CD4-positive, alpha-beta T cell (primary cell): ENCODE measurements at regions of chr12 and their contacts with region 1.

Region 1: DNA sequence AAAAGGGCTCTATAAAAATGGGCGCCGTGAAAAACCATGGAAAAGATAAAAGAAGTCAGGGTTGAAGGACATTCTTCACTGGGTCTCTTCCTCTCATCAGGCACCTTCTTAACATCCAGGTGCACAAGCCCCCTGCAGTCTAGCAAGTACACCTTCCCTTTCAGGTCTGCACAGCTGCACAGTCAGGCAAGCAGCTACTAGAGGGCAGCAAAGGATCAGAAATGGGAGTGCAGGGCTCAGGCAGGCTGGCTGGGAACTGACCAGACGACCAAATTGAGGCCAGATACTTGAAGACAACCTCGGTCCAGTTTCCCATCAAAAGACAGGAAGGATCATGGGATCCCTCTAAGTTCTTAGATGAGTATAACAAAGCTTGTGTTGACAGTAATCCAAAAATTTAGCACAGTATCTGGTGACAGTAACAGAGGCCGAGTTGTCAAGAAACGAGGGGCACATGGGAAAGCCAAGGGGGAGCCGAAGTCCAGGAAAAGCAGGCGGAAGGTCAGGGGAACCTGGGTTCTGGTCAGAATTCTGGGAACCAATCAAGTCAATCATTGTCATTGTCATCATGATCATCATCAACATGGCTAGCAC is 10.1 kb upstream of the GRIP1 start:
- DNase-seq: peak in 12 of 14 experiments; percentile 8 to 65 (median 23)
- ATAC-seq: peak; percentile 52
- H3K4me3 ChIP-seq: no peak overlapping the region
- H3K4me3 Mint-ChIP-seq: no peak overlapping the region
- H3K27ac ChIP-seq: no peak overlapping the region
- H3K27ac Mint-ChIP-seq: no peak overlapping the region
- H3K4me1 ChIP-seq: no peaks in the 10 kb centered on the region
- H3K4me1 Mint-ChIP-seq: peaks cover 3% of the 10 kb centered on the region
- H3K27me3 ChIP-seq: peaks cover 5% of the 10 kb centered on the region in 2 experiments
- H3K27me3 Mint-ChIP-seq: peaks cover 9% of the 10 kb centered on the region
- CTCF ChIP-seq: peak; percentile 61

Region 2: GRCh38 chr12:66662729-66663128 is 26.2 kb before region 1 on chr12:
- CTCF ChIA-PET with region 1: no interaction called
- POLR2A ChIA-PET with region 1: no interaction called
- intact Hi-C with region 1: loop called in 1 of 2 experiments (anchors 1 kb)
- DNase-seq: no peak
- ATAC-seq: no peak
- H3K4me3 ChIP-seq: no peak overlapping the region
- H3K4me3 Mint-ChIP-seq: no peak overlapping the region
- H3K27ac ChIP-seq: no peak overlapping the region
- H3K27ac Mint-ChIP-seq: no peak overlapping the region
- H3K4me1 ChIP-seq: no peaks in the 10 kb centered on the region
- H3K4me1 Mint-ChIP-seq: no peaks in the 10 kb centered on the region
- H3K27me3 ChIP-seq: peaks cover 3 to 4% of the 10 kb centered on the region in 2 experiments
- H3K27me3 Mint-ChIP-seq: peaks cover 17% of the 10 kb centered on the region
- CTCF ChIP-seq: no peak

Region 3: DNA sequence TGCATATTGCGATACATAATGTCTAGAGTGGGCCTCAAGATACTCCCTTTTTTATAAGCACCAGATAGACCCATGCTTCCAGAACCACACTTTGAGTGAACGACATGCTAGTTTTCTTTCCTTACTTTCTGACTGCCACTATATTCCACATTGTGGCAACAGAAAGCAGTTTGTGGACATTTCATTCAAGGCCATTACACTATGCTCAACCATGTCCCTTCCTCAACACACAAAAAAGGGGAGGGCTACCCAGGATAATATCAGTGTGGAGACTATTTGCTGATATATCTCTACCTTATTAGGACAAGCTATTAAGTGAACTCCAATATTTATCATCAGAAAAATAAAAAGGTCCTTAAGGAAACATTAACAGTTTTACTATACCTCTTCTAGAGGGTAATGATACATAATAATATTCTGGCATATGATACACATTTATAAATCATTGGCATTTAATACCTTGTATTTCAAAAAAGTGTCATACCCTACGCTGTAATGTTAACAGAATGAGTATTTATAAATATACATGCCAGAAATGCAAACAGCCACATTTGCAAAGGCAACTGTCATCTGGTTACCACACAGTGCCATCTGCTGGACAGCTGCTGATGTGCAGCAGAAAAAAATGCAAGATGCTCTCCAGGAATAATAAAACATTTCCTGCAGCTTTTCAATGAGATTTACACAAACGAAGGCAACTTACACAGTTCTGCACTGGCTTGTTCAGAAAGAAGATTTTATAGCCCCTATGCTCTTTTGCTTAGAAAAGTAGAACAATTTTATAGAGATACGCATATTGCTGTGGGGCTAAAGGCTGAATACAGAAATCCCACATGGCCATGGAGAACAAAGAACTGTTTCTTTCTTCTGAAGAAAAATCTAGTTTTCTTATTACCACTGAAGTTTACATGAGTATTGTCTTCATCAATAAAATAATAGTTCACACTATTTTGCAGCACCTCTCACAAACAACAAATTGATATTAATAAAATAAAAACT is 172.1 kb after region 1 on chr12:
- CTCF ChIA-PET with region 1: interaction called, 5 read pairs
- POLR2A ChIA-PET with region 1: no interaction called
- intact Hi-C with region 1: loop called (anchors 1 kb)
- DNase-seq: peak; percentile 39 to 78 (median 58)
- ATAC-seq: peak; percentile 62
- H3K4me3 ChIP-seq: no peak overlapping the region
- H3K4me3 Mint-ChIP-seq: no peak overlapping the region
- H3K27ac ChIP-seq: no peak overlapping the region
- H3K27ac Mint-ChIP-seq: no peak overlapping the region
- H3K4me1 ChIP-seq: no peaks in the 10 kb centered on the region
- H3K4me1 Mint-ChIP-seq: peaks cover 23% of the 10 kb centered on the region
- H3K27me3 ChIP-seq: peaks cover 0 to 1% of the 10 kb centered on the region in 2 experiments
- H3K27me3 Mint-ChIP-seq: no peaks in the 10 kb centered on the region
- CTCF ChIP-seq: peak; percentile 95